Endothelial cell of umbilical vein (primary cell): ENCODE measurements at regions of chr12 and their contacts with region 1.

Region 1: GRCh38 chr12:53344824-53345485 is 8.8 kb upstream of the SP7 start:
- DNase-seq: peak; percentile 72
- H3K4me3 ChIP-seq: peak overlapping the region; percentile 43 to 47 (median 45)
- H3K27ac ChIP-seq: peak overlapping the region; percentile 40
- H3K4me1 ChIP-seq: peaks cover 13% of the 10 kb centered on the region
- H3K27me3 ChIP-seq: peaks cover 0 to 4% of the 10 kb centered on the region in 2 experiments
- CTCF ChIP-seq: peak; percentile 57 to 86
- POLR2A ChIP-seq: peak; percentile 70

Region 2: DNA sequence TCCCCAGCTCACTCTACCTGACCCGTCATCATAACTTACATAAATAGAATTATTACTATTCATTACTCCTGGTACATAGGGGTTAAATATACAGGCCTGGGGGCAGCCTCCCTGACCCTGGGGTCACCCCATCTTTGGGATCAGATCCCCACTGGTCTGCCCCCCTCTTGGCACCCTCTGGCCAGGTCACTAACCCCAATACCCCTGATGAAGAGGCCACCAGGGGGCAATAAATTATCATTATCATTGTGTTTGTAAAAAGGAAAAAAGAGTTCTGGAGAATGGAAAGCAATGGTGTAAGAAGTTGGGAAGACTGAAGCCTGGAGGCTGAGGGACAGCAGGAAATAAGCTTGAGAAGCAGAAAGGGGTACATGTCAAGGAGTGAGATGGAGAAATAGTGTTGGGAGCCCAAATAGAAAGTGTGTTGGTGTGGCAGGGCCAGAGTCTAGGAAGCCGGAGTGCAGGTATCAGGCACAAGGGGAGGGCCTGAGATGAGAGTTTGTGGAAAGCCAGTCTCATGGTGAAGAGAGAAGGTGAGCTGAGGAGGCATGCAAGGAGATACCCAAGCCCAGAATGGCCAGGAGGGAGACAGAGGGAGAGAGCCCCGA is 17.4 kb before region 1 on chr12:
- CTCF ChIA-PET with region 1: interaction called, 225 read pairs
- POLR2A ChIA-PET with region 1: interaction called, 3 read pairs
- dilution Hi-C with region 1: no loop called
- intact Hi-C with region 1: loop called (anchors 1 kb)
- DNase-seq: peak; percentile 21
- H3K4me3 ChIP-seq: no peak overlapping the region
- H3K27ac ChIP-seq: no peak overlapping the region
- H3K4me1 ChIP-seq: peaks cover 11% of the 10 kb centered on the region
- H3K27me3 ChIP-seq: peaks cover 0 to 6% of the 10 kb centered on the region in 2 experiments
- CTCF ChIP-seq: peak in 1 of 2 donors; percentile 27
- POLR2A ChIP-seq: no peak

Region 3: GRCh38 chr12:53365245-53365904 is 20.4 kb after region 1 on chr12:
- CTCF ChIA-PET with region 1: interaction called, 10 read pairs
- POLR2A ChIA-PET with region 1: no interaction called
- dilution Hi-C with region 1: no loop called
- intact Hi-C with region 1: no loop called
- DNase-seq: no peak
- H3K4me3 ChIP-seq: no peak overlapping the region
- H3K27ac ChIP-seq: no peak overlapping the region
- H3K4me1 ChIP-seq: peaks cover under 1% of the 10 kb centered on the region
- H3K27me3 ChIP-seq: no peaks in the 10 kb centered on the region
- CTCF ChIP-seq: no peak
- POLR2A ChIP-seq: no peak

Region 4: GRCh38 chr12:53379389-53380103 is 34.6 kb after region 1 on chr12:
- CTCF ChIA-PET with region 1: interaction called, 20 read pairs
- POLR2A ChIA-PET with region 1: interaction called, 6 read pairs
- dilution Hi-C with region 1: no loop called
- intact Hi-C with region 1: no loop called
- DNase-seq: peak; percentile 100
- H3K4me3 ChIP-seq: peak overlapping the region; percentile 4 to 55 (median 47)
- H3K27ac ChIP-seq: peak overlapping the region; percentile 58
- H3K4me1 ChIP-seq: peaks cover 30% of the 10 kb centered on the region
- H3K27me3 ChIP-seq: no peaks in the 10 kb centered on the region
- CTCF ChIP-seq: no peak
- POLR2A ChIP-seq: peak; percentile 90

Region 5: DNA sequence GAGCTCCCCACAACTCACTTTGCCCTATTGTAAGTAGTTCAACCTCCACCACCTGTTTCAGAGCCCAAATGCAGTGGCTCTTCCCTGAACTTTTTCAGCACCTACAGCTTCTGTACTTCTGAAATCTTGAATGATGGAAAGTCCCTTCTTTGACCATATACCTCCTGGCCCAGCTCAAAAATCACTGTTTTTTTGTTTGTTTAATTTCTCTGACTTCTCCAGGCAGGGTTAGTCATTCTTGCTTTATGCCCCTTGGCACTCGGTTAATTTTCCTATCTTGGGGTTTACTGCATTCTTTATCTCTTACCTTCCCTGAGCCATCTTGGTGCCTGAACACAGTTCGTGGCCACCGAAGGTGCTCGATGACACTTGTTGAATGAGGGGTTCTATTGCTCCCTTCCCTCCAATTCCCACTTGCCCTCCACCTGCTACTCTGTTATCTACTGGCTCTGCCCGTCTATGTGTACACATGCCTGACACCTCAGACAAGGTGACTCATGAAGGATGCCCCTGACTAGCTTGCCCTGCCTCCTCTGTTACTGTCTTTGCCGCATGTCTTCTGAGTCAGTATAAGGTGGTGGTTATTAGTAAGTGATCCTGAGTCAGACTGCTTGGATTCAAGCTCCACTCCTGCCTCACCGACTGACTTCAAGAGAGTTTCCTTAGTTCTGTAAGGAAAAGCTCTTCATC is 83.1 kb after region 1 on chr12:
- CTCF ChIA-PET with region 1: interaction called, 47 read pairs
- POLR2A ChIA-PET with region 1: no interaction called
- dilution Hi-C with region 1: no loop called
- intact Hi-C with region 1: no loop called
- DNase-seq: no peak
- H3K4me3 ChIP-seq: no peak overlapping the region
- H3K27ac ChIP-seq: no peak overlapping the region
- H3K4me1 ChIP-seq: no peaks in the 10 kb centered on the region
- H3K27me3 ChIP-seq: no peaks in the 10 kb centered on the region
- CTCF ChIP-seq: no peak
- POLR2A ChIP-seq: no peak

Region 6: GRCh38 chr12:53500776-53501614 is 156.0 kb after region 1 on chr12 and contains the start of gene TARBP2:
- CTCF ChIA-PET with region 1: interaction called, 12 read pairs
- POLR2A ChIA-PET with region 1: no interaction called
- dilution Hi-C with region 1: no loop called
- intact Hi-C with region 1: no loop called
- DNase-seq: peak; percentile 100
- H3K4me3 ChIP-seq: peak within 1 kb of the TSS; percentile 2 to 54 (median 49)
- H3K27ac ChIP-seq: peak within 1 kb of the TSS; percentile 52
- H3K4me1 ChIP-seq: peaks cover 32% of the 10 kb centered on the region
- H3K27me3 ChIP-seq: no peaks in the 10 kb centered on the region
- CTCF ChIP-seq: no peak
- POLR2A ChIP-seq: peak; percentile 82
- total RNA-seq, gene TARBP2: 53.8 and 57.2 TPM in 2 replicates